ENCODE measurements at regions of chr22 and their contacts with region 1.

Region 1: DNA sequence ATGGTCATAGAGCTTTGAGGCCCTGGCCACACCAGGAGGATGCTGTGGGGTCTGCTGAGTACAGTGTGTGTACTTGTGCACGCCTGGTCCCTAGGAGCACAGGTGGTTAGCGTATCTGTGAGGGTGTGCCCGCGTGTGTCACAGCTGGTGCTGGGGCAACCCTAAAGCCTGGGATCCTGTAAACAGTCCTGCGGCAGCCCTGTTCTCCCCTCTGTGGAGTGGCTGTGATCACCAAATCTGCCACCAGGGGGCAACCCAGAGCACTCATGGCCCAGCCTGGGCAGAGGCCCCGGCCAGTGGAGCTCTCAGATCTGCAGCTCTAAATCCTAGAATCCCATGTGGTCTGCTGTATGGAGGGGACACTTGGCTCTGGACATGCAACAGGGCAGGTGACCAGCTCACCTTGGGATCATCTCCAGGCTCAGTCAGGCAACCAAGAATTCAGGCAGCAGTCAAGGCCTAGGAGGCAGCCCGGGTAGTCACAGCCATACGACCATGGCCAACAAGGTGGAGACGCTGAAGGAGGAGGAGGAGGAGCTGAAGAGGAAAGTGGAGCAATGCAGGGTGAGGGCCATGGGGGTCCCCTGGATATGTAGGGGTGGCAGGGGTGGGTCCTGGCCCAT is 3.9 kb downstream of the SH3BP1 start:
- H3K4me3 ChIP-seq: no peak overlapping the region
- H3K27ac ChIP-seq: no peak overlapping the region
- H3K4me1 ChIP-seq: peaks cover 8% of the 10 kb centered on the region; the same call in 1 of the 2 replicates
- CTCF ChIP-seq: peak; percentile 89

Region 2: DNA sequence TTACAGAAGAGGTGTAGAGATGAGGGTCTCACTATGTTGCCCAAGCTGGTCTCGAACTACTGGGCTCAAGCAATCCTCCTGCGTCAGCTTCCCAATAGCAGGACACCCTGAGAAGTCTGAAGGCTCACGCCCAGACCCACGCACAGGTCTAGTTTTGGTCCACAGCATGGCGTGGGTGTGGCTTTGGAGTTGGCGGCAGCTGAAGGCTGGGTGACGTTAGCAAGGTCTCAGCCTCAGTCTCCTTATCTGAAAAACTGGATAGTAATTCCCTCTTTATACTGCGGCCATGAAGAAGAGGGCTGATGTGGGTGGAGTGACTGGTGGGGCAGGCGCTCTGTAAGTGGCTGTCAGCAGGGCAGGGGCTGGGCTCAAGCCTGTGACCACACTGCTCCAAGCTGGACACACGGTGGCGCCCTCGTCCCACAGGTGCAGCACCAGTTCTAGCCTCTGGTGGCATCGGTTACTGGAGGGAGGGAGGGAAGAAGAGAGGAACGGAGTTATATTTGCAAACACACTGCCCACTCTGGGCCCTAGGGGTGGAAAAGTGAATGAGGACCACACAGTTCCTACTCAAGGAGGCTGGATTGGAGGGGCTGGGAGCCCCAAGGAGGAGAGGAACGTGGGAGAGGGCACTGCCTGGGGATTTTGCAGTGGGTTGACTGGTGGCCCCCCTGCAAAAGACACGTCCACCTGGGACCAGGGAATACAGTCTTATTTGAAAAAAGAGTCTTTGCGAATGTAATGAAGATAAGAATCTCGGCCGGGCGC is 104.6 kb before region 1 on chr22:
- CTCF ChIA-PET with region 1: interaction called, 12 read pairs
- POLR2A ChIA-PET with region 1: no interaction called
- H3K4me3 ChIP-seq: no peak overlapping the region
- H3K27ac ChIP-seq: no peak overlapping the region; the same call in 1 of the 2 replicates
- H3K4me1 ChIP-seq: peaks cover 7% of the 10 kb centered on the region
- CTCF ChIP-seq: peak; percentile 100

Region 3: DNA sequence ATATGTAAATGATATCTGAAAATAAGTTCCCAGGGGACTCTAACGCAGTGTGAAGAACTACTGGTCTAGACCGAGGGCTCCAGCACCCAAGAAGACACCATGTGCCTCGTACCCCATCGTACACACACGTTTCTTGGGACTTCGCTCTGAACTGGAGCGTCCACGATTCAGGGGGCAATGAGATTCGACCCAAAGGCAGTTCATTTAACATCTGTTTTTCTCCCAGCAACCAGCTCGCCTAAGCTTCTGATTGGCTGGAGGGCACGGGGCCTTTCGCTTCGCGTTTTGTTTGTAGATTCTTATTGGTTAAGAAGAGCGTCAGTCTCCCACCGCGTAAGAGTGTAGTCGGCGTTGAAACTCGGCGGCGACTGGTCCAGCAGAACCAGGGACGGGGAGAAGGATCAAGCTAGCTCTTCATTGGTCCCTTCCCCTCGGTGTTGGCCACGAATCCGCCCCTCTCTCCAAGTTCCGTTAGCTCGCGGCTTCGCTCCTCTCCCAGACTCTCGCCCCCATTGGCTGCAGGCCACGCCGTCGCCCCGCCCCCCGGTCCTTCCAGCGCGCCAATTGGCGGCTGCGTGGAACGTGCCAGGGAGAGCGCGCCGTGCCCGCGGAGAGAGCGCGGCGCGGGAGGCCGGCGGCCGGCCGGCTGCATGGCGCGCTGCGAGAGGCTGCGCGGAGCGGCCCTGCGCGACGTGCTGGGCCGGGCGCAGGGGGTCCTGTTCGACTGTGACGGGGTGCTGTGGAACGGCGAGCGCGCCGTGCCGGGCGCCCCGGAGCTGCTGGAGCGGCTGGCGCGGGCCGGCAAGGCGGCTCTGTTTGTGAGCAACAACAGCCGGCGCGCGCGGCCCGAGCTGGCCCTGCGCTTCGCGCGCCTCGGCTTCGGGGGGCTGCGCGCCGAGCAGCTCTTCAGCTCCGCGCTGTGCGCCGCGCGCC is 15.1 kb after region 1 on chr22 and contains the start of gene PDXP:
- CTCF ChIA-PET with region 1: interaction called, 138 read pairs
- POLR2A ChIA-PET with region 1: interaction called, 85 read pairs
- H3K4me3 ChIP-seq: peak within 1 kb of the TSS; percentile 85
- H3K27ac ChIP-seq: peak within 1 kb of the TSS; percentile 90
- H3K4me1 ChIP-seq: peaks cover 12% of the 10 kb centered on the region
- CTCF ChIP-seq: no peak

Region 4: GRCh38 chr22:37676736-37677492 is 33.6 kb after region 1 on chr22:
- CTCF ChIA-PET with region 1: interaction called, 353 read pairs
- POLR2A ChIA-PET with region 1: interaction called, 12 read pairs
- H3K4me3 ChIP-seq: peak overlapping the region; percentile 39
- H3K27ac ChIP-seq: peak overlapping the region; percentile 62
- H3K4me1 ChIP-seq: peaks cover 9% of the 10 kb centered on the region
- CTCF ChIP-seq: no peak

Region 5: GRCh38 chr22:37696657-37697537 is 53.6 kb after region 1 on chr22 and contains the start of gene TRIOBP:
- CTCF ChIA-PET with region 1: interaction called, 14 read pairs
- POLR2A ChIA-PET with region 1: interaction called, 3 read pairs
- H3K4me3 ChIP-seq: no peak within 1 kb of the TSS
- H3K27ac ChIP-seq: no peak within 1 kb of the TSS
- H3K4me1 ChIP-seq: peaks cover 6% of the 10 kb centered on the region
- CTCF ChIP-seq: peak; percentile 73

Region 6: GRCh38 chr22:38167988-38168431 is 524.7 kb after region 1 on chr22:
- CTCF ChIA-PET with region 1: no interaction called
- POLR2A ChIA-PET with region 1: no interaction called
- H3K4me3 ChIP-seq: no peak overlapping the region
- H3K27ac ChIP-seq: no peak overlapping the region
- H3K4me1 ChIP-seq: no peaks in the 10 kb centered on the region
- CTCF ChIP-seq: no peak

Measured in HEK293 (cell line).